Activated CD4-positive, alpha-beta memory T cell treated with anti-CD3 and anti-CD28 coated beads, Interleukin-2, amount 10 ng/mL, durations not matched to agents 7 days and 5 days (primary cell): ENCODE measurements at regions of chr10 and their contacts with region 1.

Region 1: DNA sequence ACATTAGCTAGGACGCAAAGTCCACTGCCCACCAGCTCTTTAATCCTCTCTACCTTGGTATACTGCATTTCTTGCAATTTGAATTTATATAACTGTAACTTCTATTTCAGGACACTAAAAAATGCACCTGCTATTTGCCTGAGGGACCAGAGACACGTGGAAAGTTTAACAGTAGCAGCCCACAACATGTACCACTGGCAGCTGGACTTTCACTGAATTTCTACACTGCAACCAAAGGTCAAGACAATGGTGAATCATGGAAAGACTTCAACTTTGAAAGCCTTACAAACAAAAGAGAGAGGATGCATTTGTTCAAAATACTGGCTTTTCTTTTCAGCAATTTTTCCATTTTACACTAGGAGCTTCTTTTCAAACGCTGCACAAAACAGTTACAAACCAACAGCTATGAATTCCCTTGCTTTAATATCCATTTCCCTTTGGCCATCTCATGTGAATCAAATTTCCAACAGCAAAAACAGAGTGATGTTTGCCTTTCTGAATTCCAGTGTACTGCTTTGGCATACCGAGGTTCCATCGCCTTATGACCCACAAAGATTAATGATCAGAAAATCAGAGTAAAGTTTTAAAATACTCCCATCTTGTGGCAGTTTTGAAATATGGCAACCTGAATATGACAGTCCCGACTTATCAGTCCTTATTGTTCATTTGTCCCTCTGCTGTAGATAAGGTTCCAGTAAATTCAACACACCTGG is 29.9 kb upstream of the HNRNPH3 start:
- DNase-seq: no peak
- H3K4me3 Mint-ChIP-seq: no peak overlapping the region
- H3K27ac Mint-ChIP-seq: no peak overlapping the region
- H3K4me1 Mint-ChIP-seq: no peaks in the 10 kb centered on the region
- H3K27me3 Mint-ChIP-seq: no peaks in the 10 kb centered on the region

Region 2: DNA sequence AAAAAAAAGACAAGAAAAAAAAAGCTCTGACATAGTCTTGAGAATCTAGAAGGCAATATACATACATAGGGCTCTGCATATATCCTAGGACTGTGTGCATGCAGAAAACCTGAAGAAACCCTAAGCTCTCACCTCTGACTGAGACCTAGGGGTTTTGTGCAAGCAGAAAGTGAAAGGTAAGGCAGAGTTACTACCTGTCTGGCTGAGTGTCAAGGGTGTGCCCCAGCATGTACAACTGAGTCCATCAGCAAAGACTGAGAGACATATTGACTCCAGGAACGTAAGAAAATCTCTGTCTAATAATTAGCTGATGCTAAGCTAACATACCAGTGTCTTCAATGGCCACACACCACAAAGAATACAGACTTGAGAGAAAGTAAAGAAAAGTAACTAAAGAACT is 13.6 kb after region 1 on chr10:
- CTCF ChIA-PET with region 1: interaction called, 20 read pairs
- POLR2A ChIA-PET with region 1: no interaction called
- DNase-seq: no peak
- H3K4me3 Mint-ChIP-seq: no peak overlapping the region
- H3K27ac Mint-ChIP-seq: no peak overlapping the region
- H3K4me1 Mint-ChIP-seq: peaks cover 6% of the 10 kb centered on the region
- H3K27me3 Mint-ChIP-seq: no peaks in the 10 kb centered on the region